ENCODE measurements at regions of chr9 and their contacts with region 1.

Region 1: GRCh38 chr9:73143606-73144328 is 7.9 kb upstream of the ANXA1 start:
- DNase-seq: peak; percentile 39 to 91
- H3K4me3 ChIP-seq: peak overlapping the region; percentile 16; the same call in 1 of the 2 replicates
- H3K27ac ChIP-seq: peak overlapping the region; percentile 96
- H3K4me1 ChIP-seq: peaks cover 44% of the 10 kb centered on the region
- H3K27me3 ChIP-seq: no peaks in the 10 kb centered on the region
- CTCF ChIP-seq: no peak

Region 2: GRCh38 chr9:73116031-73116430 is 27.7 kb before region 1 on chr9:
- CTCF ChIA-PET with region 1: no interaction called
- POLR2A ChIA-PET with region 1: interaction called, 27 read pairs
- intact Hi-C with region 1: no loop called
- DNase-seq: no peak
- H3K4me3 ChIP-seq: no peak overlapping the region
- H3K27ac ChIP-seq: peak overlapping the region; percentile 51
- H3K4me1 ChIP-seq: peaks cover 30% of the 10 kb centered on the region
- H3K27me3 ChIP-seq: no peaks in the 10 kb centered on the region
- CTCF ChIP-seq: no peak

Region 3: DNA sequence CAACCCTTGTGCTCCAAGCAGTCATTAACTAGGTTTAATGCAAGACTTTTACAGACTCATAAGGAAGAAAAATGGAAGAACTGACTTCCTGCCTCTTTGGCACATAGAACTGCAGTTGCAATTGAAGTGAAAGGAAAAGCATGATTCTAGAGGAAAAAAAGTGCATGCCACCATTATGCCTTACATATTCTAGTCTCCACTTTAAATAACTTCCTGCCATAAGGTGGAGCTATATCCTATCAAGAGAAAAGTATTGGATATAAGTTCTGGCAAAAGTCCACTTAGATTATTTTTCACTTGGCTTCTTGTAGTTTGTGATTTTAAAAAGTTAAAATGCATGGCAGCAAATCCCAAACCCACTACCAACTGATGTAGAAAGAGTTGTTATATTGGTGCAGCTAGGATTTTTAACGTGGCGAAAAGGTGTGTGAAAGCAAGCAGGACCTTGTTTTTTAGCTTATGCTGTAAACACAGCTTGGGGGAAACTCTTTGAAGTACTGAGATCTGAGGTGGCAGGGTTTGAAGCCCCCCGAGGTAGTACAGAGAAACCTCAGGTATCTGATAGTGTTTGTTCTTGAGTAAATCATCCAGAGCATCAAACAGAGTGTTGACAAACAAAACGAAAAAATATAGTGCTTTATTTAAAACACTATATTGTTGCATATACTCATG is 125.8 kb after region 1 on chr9:
- CTCF ChIA-PET with region 1: no interaction called
- POLR2A ChIA-PET with region 1: no interaction called
- intact Hi-C with region 1: no loop called
- DNase-seq: no peak
- H3K4me3 ChIP-seq: no peak overlapping the region
- H3K27ac ChIP-seq: no peak overlapping the region
- H3K4me1 ChIP-seq: peaks cover 7% of the 10 kb centered on the region
- H3K27me3 ChIP-seq: no peaks in the 10 kb centered on the region
- CTCF ChIP-seq: peak; percentile 43; the same call in 1 of the 2 replicates